ENCODE measurements at regions of chr2 and their contacts with region 1.

Region 1: GRCh38 chr2:60899230-60899891 is 18.0 kb downstream of the REL start:
- DNase-seq: no peak
- ATAC-seq: no peak
- H3K4me3 ChIP-seq: no peak overlapping the region
- H3K27ac ChIP-seq: no peak overlapping the region
- H3K4me1 ChIP-seq: peaks cover 0 to 10% (median 0%) of the 10 kb centered on the region in 12 donors
- H3K27me3 ChIP-seq: no peaks in the 10 kb centered on the region
- CTCF ChIP-seq: no peak
- POLR2A ChIP-seq: no peak

Region 2: GRCh38 chr2:60861736-60862135 is 37.6 kb before region 1 on chr2:
- intact Hi-C with region 1: loop called in 1 of 10 experiments (anchors 2 kb)
- DNase-seq: no peak
- ATAC-seq: no peak
- H3K4me3 ChIP-seq: no peak overlapping the region
- H3K27ac ChIP-seq: no peak overlapping the region
- H3K4me1 ChIP-seq: peaks cover 0 to 10% (median 0%) of the 10 kb centered on the region in 12 donors
- H3K27me3 ChIP-seq: peaks cover 0 to 2% (median 0%) of the 10 kb centered on the region in 9 donors
- CTCF ChIP-seq: no peak
- POLR2A ChIP-seq: no peak

Region 3: DNA sequence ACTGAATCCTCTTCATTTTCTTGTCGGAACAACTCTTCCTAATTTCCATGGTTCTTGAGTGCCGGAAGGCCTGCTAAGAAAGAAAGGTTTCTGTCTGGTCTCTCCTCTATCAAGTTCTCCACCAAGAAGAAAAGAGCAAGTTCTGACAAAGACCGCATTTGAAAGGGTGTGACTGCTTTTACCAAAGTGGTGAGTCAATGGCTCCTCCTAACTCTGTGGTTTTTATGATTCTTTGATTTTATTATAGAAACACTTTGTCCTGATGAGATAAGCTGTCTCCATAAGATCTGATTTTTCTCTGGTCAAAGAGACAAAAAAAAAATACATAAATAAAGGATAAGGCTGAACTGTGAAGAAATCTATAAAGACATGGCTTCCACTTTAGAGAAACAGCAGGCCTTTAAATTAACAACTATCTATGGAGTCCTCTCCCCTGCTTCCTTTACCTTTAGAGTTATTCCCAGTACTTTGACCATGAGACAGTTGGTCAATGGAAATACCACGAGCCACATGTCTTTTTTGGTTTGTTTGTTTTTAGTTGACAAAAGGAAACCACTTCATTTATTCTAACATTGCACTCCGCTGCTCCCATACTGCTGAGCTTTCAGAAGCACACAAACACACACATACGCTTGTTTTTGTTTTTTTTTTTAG is 49.7 kb after region 1 on chr2:
- intact Hi-C with region 1: no loop called
- DNase-seq: no peak
- ATAC-seq: no peak
- H3K4me3 ChIP-seq: no peak overlapping the region
- H3K27ac ChIP-seq: no peak overlapping the region
- H3K4me1 ChIP-seq: no peaks in the 10 kb centered on the region
- H3K27me3 ChIP-seq: no peaks in the 10 kb centered on the region
- CTCF ChIP-seq: no peak
- POLR2A ChIP-seq: no peak

Region 4: DNA sequence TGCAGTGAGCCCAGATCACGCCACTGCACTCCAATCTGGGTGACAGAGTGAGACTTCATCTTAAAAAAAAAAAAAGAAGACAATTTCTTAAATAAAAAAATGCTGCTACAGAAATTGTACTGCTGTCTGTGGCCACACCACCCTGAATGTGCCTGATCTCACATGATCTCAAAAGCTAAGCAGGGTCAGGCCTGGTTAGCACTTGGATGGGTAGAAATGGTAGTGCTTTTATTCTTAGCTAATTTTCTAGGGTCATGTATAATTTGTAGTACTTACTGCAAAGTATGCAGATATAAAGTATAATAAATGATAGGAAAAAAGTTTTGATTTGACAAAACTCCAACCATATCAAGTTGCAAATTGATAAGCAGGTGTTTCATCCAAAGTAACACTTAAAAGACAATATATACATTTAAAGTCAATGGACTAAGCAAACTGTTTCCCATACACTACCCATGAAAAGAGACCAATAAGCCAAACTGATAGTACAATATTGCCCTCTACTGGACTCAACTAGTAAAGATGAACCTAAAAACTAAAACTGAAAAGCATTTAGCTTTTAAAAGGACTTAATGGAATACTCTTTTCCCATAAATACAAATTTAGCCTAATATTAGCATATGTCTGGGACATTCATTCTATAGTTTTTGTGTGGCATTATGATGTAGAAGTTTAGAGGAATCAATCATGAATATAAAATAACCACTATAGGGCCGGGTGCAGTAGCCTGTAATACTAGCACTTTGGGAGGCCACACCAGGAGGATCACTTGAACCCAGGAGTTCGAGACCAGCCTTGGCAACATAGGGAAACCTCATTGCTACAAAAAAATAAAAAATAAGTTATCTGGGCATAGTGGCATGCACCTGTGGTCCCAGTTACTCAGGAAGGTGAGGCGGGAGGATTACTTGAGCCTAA is 99.5 kb after region 1 on chr2:
- intact Hi-C with region 1: no loop called
- DNase-seq: no peak
- ATAC-seq: peak in 2 of 4 donors; percentile 42 to 51
- H3K4me3 ChIP-seq: no peak overlapping the region
- H3K27ac ChIP-seq: no peak overlapping the region
- H3K4me1 ChIP-seq: peaks cover 0 to 8% (median 0%) of the 10 kb centered on the region in 12 donors
- H3K27me3 ChIP-seq: no peaks in the 10 kb centered on the region
- CTCF ChIP-seq: peak; percentile 40 to 74 (median 67)
- POLR2A ChIP-seq: no peak

Region 5: DNA sequence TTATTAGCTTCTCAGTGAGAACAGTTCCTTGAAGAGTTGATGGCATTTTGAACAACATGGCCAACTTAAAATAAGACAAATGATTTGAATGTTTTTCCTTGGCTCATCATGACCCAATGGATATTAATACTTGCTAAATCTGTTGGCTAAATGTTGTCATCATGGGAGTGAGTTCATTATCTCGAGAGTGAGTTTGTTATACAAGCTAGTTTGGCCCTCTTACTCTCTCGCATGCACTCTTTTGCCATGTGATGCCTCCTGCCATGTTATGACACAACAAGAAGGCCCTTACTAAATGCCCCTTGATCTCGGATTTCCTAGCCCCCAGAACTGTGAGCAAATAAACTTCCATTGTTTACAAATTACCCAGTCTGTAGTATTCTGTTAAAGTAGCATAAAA is 143.4 kb after region 1 on chr2:
- intact Hi-C with region 1: no loop called
- DNase-seq: peak in 1 of 5 donors; percentile 15
- ATAC-seq: peak; percentile 41 to 88 (median 84)
- H3K4me3 ChIP-seq: no peak overlapping the region
- H3K27ac ChIP-seq: peak overlapping the region in 10 of 12 donors; percentile 3 to 76 (median 53)
- H3K4me1 ChIP-seq: peaks cover 0 to 49% (median 24%) of the 10 kb centered on the region in 12 donors
- H3K27me3 ChIP-seq: no peaks in the 10 kb centered on the region
- CTCF ChIP-seq: no peak
- POLR2A ChIP-seq: no peak